ENCODE measurements at regions of chr20 and their contacts with region 1.

Region 1: GRCh38 chr20:59782986-59783640 is 150.3 kb downstream of the SYCP2 start:
- DNase-seq: peak; percentile 55
- ATAC-seq: peak; percentile 80
- H3K4me3 ChIP-seq: no peak overlapping the region
- H3K27ac ChIP-seq: no peak overlapping the region
- H3K4me1 ChIP-seq: no peaks in the 10 kb centered on the region
- H3K27me3 ChIP-seq: 0 out of 5 replicates have a peak, but pooled peaks cover 0 to 15% of the 10 kb centered on the region in 2 experiments
- CTCF ChIP-seq: peak; percentile 88
- EP300 ChIP-seq: no peak
- POLR2A ChIP-seq: no peak
- RAD21 ChIP-seq: no peak

Region 2: GRCh38 chr20:59850018-59850641 is 67.0 kb after region 1 on chr20:
- CTCF ChIA-PET with region 1: interaction called, 15 read pairs
- POLR2A ChIA-PET with region 1: no interaction called
- in situ Hi-C with region 1: loop called (anchors 5 kb)
- intact Hi-C with region 1: loop called (anchors 1 kb)
- DNase-seq: peak; percentile 56
- ATAC-seq: peak; percentile 74
- H3K4me3 ChIP-seq: no peak overlapping the region
- H3K27ac ChIP-seq: no peak overlapping the region
- H3K4me1 ChIP-seq: no peaks in the 10 kb centered on the region
- H3K27me3 ChIP-seq: no peaks in the 10 kb centered on the region
- CTCF ChIP-seq: peak; percentile 57
- EP300 ChIP-seq: no peak
- POLR2A ChIP-seq: no peak
- RAD21 ChIP-seq: no peak

Measured in HepG2 (cell line).